T-cell (primary cell): ENCODE measurements at regions of chr11 and their contacts with region 1.

Region 1: DNA sequence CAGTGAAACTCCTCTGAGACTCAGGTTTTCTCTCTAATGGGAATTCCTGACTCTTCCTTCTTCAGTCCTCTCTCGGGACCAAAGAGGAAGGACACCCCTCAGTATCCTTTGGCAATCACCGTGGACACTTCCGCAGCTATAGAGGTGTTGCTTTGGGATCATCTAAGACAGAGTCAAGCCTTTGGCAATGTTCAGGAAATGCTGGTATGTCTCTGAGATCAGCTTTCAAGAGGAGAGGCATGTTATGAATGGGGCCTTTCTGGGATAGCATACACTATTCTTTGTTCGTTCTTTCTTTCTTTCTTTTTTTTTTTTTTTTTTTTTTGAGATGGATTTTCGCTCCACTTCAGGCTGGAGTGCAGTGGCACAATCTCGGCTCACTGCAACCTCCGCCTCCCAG is 14.2 kb upstream of the OLFML1 start:
- DNase-seq: no peak
- ATAC-seq: no peak
- H3K4me3 ChIP-seq: no peak overlapping the region
- H3K4me3 Mint-ChIP-seq: no peak overlapping the region
- H3K27ac ChIP-seq: no peak overlapping the region
- H3K27ac Mint-ChIP-seq: no peak overlapping the region
- H3K4me1 ChIP-seq: no peaks in the 10 kb centered on the region
- H3K4me1 Mint-ChIP-seq: no peaks in the 10 kb centered on the region
- H3K27me3 ChIP-seq: no peaks in the 10 kb centered on the region
- H3K27me3 Mint-ChIP-seq: no peaks in the 10 kb centered on the region

Region 2: DNA sequence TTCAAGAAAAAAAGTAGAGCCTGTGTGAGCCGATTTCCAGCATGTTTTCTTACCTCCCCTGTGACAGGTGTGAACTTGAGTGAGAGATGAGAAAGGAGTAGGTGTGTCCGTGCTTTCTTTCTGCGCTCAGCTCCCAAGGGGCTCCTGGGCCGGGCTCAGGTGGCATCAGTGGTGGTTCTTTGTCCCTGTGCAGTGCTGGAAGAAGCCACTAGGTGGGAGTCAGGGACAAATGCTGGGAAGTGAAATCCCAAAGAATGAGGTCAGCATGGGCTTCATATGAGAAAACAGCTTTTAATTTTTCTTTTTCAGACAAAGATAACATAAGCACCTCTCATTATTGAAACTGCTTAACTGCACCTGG is 100.6 kb after region 1 on chr11:
- CTCF ChIA-PET with region 1: interaction called in 1 of 2 experiments, 10 read pairs
- POLR2A ChIA-PET with region 1: no interaction called
- DNase-seq: no peak
- ATAC-seq: no peak
- H3K4me3 ChIP-seq: no peak overlapping the region
- H3K4me3 Mint-ChIP-seq: no peak overlapping the region
- H3K27ac ChIP-seq: no peak overlapping the region
- H3K27ac Mint-ChIP-seq: no peak overlapping the region
- H3K4me1 ChIP-seq: peaks cover 4 to 12% of the 10 kb centered on the region in 2 experiments
- H3K4me1 Mint-ChIP-seq: peaks cover 19 to 33% (median 21%) of the 10 kb centered on the region in 3 donors
- H3K27me3 ChIP-seq: peaks cover 4 to 51% of the 10 kb centered on the region in 2 experiments
- H3K27me3 Mint-ChIP-seq: peaks cover 0 to 20% of the 10 kb centered on the region in 2 donors